Breast epithelium (tissue), 4 donors: ENCODE measurements at regions of chr14 and their contacts with region 1.

Region 1: GRCh38 chr14:41096131-41096530 is 510.5 kb upstream of the LRFN5 start:
- DNase-seq: no peak
- H3K4me3 ChIP-seq: no peak overlapping the region
- H3K27ac ChIP-seq: no peak overlapping the region
- H3K4me1 ChIP-seq: no peaks in the 10 kb centered on the region
- H3K27me3 ChIP-seq: no peaks in the 10 kb centered on the region
- CTCF ChIP-seq: no peak
- POLR2A ChIP-seq: no peak

Region 2: DNA sequence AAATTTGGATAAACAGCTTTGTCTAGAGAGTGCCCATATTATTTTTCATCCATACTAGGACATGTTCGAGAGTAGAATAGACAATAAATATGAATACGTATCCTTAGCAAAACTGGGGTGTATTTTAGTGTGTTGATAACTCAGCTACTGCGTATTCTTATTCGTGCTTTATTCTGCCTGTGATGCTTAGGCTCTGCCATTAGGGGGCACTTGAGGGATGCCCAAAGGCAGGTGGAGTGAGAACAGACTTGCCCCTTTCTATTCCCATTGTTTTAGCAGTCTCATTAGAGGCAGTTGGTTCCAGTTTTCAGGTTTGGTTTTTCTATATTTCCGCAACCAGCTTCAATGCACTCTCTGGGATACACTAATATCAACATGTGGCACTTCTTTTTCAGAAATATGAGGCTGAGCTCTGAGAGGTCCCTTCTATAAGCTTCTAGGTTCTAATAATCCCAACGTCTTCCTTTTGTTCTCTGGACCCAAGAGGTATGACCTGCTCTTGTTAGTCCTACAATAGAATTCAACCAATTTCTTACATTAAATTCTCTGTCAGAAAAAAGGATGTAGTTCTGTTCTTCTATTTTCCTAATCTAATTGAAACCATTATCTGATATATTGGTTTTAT is 678.2 kb before region 1 on chr14:
- intact Hi-C with region 1: loop called (anchors 5 kb)
- DNase-seq: no peak
- H3K4me3 ChIP-seq: no peak overlapping the region
- H3K27ac ChIP-seq: no peak overlapping the region
- H3K4me1 ChIP-seq: no peaks in the 10 kb centered on the region
- H3K27me3 ChIP-seq: no peaks in the 10 kb centered on the region
- CTCF ChIP-seq: peak in 1 of 3 donors; percentile 26
- POLR2A ChIP-seq: no peak